AG04450 (cell line): ENCODE measurements at regions of chr22 and their contacts with region 1.

Region 1: GRCh38 chr22:25048659-25049647 is 96.4 kb downstream of the KIAA1671 start:
- DNase-seq: no peak
- H3K4me3 ChIP-seq: no peak overlapping the region
- H3K27ac ChIP-seq: no peak overlapping the region
- H3K27me3 ChIP-seq: no peaks in the 10 kb centered on the region
- CTCF ChIP-seq: peak; percentile 79

Region 2: DNA sequence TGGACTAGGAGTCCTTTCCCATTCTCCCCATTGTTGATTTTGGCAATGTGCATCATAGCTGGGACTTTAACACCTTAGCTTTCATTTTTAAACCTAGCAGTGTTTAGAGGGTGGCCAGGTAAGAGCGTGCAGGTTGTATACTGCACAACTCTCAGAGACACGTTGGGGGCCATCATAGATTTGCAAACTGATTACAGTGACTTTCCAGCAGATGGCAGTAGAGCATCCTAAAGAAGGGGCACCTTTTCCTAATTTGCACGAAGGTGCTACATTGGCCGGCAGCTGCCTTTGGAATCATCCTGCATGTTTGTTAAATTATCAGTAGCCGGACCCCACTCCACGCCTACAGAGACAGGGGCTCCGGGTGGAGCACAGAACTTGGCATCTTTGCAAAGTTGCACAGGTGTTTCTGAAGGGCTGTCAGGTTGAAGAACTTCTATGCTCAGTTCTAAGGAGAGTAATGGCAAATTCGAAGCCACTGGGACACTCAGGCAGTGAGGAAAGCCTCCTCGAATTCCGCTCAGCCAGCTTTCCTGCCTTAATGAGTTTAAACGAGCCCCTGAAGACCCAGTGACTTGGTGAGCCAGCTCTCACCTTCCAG is 110.1 kb before region 1 on chr22:
- CTCF ChIA-PET with region 1: interaction called, 12 read pairs
- POLR2A ChIA-PET with region 1: no interaction called
- DNase-seq: no peak
- H3K4me3 ChIP-seq: no peak overlapping the region
- H3K27ac ChIP-seq: no peak overlapping the region
- H3K27me3 ChIP-seq: no peaks in the 10 kb centered on the region
- CTCF ChIP-seq: peak; percentile 68

Region 3: GRCh38 chr22:24994070-24994763 is 54.7 kb before region 1 on chr22:
- CTCF ChIA-PET with region 1: no interaction called
- POLR2A ChIA-PET with region 1: no interaction called
- DNase-seq: no peak
- H3K4me3 ChIP-seq: no peak overlapping the region
- H3K27ac ChIP-seq: no peak overlapping the region
- H3K27me3 ChIP-seq: no peaks in the 10 kb centered on the region
- CTCF ChIP-seq: no peak

Region 4: GRCh38 chr22:25153961-25154666 is 105.2 kb after region 1 on chr22:
- CTCF ChIA-PET with region 1: no interaction called
- POLR2A ChIA-PET with region 1: no interaction called
- DNase-seq: no peak
- H3K4me3 ChIP-seq: no peak overlapping the region
- H3K27ac ChIP-seq: no peak overlapping the region
- H3K27me3 ChIP-seq: no peaks in the 10 kb centered on the region
- CTCF ChIP-seq: no peak